Endothelial cell of umbilical vein (primary cell): ENCODE measurements at regions of chr10 and their contacts with region 1.

Region 1: DNA sequence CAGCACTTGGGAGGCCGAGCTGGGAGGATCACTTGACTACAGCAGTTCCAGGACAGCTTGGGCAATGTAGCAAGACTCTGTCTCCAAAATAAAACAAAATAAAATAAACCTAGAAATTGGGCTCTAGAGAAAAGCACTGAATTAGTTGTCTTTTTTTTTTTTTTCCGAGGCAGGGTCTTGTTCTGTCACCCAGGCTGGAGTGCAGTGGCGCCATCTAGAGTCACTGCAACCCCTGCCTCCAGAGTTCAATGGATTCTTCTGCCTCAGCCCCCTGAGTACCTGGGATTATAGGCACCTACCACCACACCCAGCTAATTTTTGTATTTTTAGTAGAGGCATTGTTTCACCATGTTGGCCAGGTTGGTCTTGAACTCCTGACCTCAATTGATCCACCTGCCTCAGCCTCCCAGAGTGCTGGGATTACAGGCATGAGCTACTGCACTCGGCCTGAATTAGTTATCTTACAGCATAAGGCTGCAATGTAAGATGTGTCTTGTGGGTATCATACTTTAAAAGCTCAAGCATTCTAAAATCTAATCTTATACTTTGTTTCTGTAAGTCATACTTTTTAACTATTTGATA is 12.8 kb downstream of the MEIG1 start:
- DNase-seq: peak; percentile 33
- H3K4me3 ChIP-seq: no peak overlapping the region
- H3K27ac ChIP-seq: no peak overlapping the region
- H3K4me1 ChIP-seq: no peaks in the 10 kb centered on the region
- H3K27me3 ChIP-seq: no peaks in the 10 kb centered on the region
- CTCF ChIP-seq: peak; percentile 44 to 70
- POLR2A ChIP-seq: no peak

Region 2: GRCh38 chr10:14500172-14500765 is 471.7 kb before region 1 on chr10:
- CTCF ChIA-PET with region 1: interaction called, 4 read pairs
- POLR2A ChIA-PET with region 1: no interaction called
- dilution Hi-C with region 1: no loop called
- intact Hi-C with region 1: loop called (anchors 1 kb)
- DNase-seq: no peak
- H3K4me3 ChIP-seq: no peak overlapping the region
- H3K27ac ChIP-seq: no peak overlapping the region
- H3K4me1 ChIP-seq: no peaks in the 10 kb centered on the region
- H3K27me3 ChIP-seq: no peaks in the 10 kb centered on the region
- CTCF ChIP-seq: no peak
- POLR2A ChIP-seq: no peak

Region 3: DNA sequence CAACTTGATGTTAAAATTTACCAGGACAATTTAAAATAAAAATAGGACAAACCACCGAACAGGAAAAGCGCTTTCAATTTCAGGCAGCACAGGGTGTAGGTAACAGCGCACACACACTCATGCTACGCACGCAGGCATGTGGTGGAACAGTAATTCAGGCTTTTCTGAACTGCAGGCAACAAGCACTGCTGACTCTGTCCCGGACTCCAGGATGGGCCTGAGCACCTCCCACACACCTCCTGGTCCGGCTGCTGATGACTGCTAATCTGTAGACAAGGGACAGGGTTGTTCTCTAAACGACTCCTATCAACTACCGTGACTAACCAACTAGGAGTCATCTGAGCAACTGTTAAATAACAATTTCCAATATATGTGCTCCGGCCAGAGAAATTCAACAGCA is 448.7 kb before region 1 on chr10:
- CTCF ChIA-PET with region 1: no interaction called
- POLR2A ChIA-PET with region 1: no interaction called
- dilution Hi-C with region 1: no loop called
- intact Hi-C with region 1: no loop called
- DNase-seq: no peak
- H3K4me3 ChIP-seq: no peak overlapping the region
- H3K27ac ChIP-seq: no peak overlapping the region
- H3K4me1 ChIP-seq: peaks cover 7% of the 10 kb centered on the region
- H3K27me3 ChIP-seq: no peaks in the 10 kb centered on the region
- CTCF ChIP-seq: no peak
- POLR2A ChIP-seq: no peak

Region 4: DNA sequence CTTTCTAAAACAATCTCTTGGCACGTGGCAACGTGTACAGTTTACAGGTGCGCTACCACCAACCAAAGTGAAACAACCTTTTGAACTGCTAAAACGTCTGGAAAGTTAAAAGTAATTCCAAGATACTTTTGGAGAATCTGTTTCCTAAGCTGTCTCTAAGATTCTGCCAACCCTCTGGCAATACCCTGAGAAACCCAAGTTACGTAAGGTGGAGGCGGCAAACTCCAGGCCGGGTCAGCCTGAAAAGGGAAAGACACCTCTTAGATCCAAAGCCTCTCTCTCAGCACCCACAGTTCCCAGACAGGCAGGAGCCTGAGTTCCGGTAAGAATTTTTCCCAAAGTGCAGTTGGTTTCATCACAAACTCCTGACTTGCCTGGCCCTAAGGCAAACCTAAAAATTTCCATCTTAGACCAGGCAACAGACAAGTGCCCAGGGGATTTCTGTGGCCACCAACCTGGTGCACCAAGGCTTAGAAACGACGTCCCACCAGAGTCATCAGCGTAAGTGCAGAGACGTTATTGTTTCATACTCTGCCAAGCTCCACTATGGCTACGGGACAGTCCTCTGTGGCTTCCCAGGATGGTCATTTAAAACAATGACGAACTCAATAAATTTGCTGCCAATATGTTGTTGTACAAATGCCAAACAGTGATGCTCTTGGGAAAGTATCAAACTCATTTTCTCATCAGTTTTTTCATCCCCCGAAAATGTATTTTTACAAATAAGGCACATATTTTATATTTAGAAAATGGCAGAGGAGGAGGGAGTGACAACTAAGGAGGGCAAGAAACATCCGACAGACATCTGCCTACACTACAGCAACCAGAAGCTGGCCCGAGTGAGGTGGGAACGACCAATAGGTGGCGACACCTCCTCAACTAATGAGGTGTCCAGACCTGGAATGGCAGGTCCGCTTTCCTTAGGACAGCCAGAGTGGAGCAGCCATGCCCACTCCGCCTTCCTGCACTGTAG is 435.4 kb before region 1 on chr10:
- CTCF ChIA-PET with region 1: no interaction called
- POLR2A ChIA-PET with region 1: no interaction called
- dilution Hi-C with region 1: no loop called
- intact Hi-C with region 1: loop called (anchors 5 kb)
- DNase-seq: peak; percentile 65
- H3K4me3 ChIP-seq: no peak overlapping the region
- H3K27ac ChIP-seq: no peak overlapping the region
- H3K4me1 ChIP-seq: no peaks in the 10 kb centered on the region
- H3K27me3 ChIP-seq: no peaks in the 10 kb centered on the region
- CTCF ChIP-seq: peak; percentile 55 to 59
- POLR2A ChIP-seq: no peak

Region 5: GRCh38 chr10:14954001-14954770 is 17.8 kb before region 1 on chr10 and contains the start of gene DCLRE1C:
- CTCF ChIA-PET with region 1: interaction called, 11 read pairs
- POLR2A ChIA-PET with region 1: no interaction called
- dilution Hi-C with region 1: no loop called
- intact Hi-C with region 1: no loop called
- DNase-seq: peak; percentile 87
- H3K4me3 ChIP-seq: peak within 1 kb of the TSS; percentile 48 to 73 (median 69)
- H3K27ac ChIP-seq: peak within 1 kb of the TSS; percentile 79
- H3K4me1 ChIP-seq: peaks cover 18% of the 10 kb centered on the region
- H3K27me3 ChIP-seq: no peaks in the 10 kb centered on the region
- CTCF ChIP-seq: no peak
- POLR2A ChIP-seq: peak; percentile 71
- total RNA-seq, gene DCLRE1C: 11.0 and 15.8 TPM in 2 replicates

Region 6: GRCh38 chr10:14995964-14996565 is 24.1 kb after region 1 on chr10:
- CTCF ChIA-PET with region 1: no interaction called
- POLR2A ChIA-PET with region 1: no interaction called
- dilution Hi-C with region 1: no loop called
- intact Hi-C with region 1: no loop called
- DNase-seq: no peak
- H3K4me3 ChIP-seq: no peak overlapping the region
- H3K27ac ChIP-seq: no peak overlapping the region
- H3K4me1 ChIP-seq: no peaks in the 10 kb centered on the region
- H3K27me3 ChIP-seq: no peaks in the 10 kb centered on the region
- CTCF ChIP-seq: no peak
- POLR2A ChIP-seq: no peak

Region 7: GRCh38 chr10:15605740-15606369 is 633.9 kb after region 1 on chr10:
- CTCF ChIA-PET with region 1: no interaction called
- POLR2A ChIA-PET with region 1: no interaction called
- dilution Hi-C with region 1: no loop called
- intact Hi-C with region 1: no loop called
- DNase-seq: peak; percentile 5
- H3K4me3 ChIP-seq: no peak overlapping the region
- H3K27ac ChIP-seq: no peak overlapping the region
- H3K4me1 ChIP-seq: peaks cover 6% of the 10 kb centered on the region
- H3K27me3 ChIP-seq: peaks cover 13 to 22% of the 10 kb centered on the region in 2 experiments
- CTCF ChIP-seq: no peak
- POLR2A ChIP-seq: no peak